Dorsolateral prefrontal cortex (tissue), 120 donors: ENCODE measurements at regions of chr7 and their contacts with region 1.

Region 1: DNA sequence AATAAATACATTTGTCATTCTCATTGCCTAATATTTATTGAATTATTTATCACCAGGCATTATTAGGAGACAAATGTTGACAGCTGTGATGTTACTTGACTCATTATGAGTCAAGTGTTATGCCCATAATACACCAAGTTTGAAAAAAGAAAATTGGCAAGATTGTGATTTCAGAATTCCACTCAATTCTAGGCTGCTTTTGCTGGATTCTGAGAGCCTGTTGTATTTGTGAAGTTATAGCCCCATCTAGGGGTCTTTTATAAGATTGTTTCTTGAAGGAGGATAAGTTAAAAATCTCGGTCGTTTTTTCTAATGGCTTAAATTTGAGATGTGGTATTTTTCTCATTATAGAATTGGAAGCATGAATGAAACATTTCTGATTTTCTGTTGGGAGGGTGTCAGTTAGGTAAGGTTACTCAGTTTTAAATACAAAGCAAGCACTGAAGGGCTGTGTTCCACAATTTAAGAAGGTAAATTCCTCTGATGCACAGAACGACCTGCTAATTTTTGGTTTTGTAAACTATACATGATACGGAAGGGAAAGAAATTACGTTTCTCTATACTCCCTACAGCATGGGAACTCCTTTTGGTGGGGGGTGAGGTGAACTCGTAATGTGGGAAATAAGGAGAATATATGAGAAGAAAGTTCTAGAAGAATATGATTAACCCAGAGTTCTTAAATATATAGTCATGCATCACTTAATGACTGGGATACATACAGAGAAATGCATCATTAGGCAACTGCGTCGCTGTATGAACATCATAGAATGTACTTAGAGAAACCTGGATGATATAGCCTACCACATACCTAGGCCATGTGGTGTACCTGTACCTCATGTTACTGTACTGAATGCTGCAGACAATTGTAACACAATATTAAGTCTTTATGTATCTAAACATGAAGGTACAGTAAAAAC is 2.6 kb downstream of the STK31 start:
- DNase-seq: no peak
- H3K4me3 ChIP-seq: no peak overlapping the region
- H3K27ac ChIP-seq: no peak overlapping the region
- H3K27me3 ChIP-seq: no peaks in the 10 kb centered on the region
- CTCF ChIP-seq: peak; percentile 57 to 96 (median 79)

Region 2: GRCh38 chr7:23546897-23547572 is 165.6 kb before region 1 on chr7:
- intact Hi-C with region 1: loop called (anchors 5 to 10 kb)
- DNase-seq: peak; percentile 55 to 85 (median 73)
- H3K4me3 ChIP-seq: peak overlapping the region in 10 of 59 donors; percentile 0 to 47 (median 12)
- H3K27ac ChIP-seq: no peak overlapping the region
- H3K27me3 ChIP-seq: no peaks in the 10 kb centered on the region
- CTCF ChIP-seq: peak; percentile 92 to 100 (median 98)

Region 3: GRCh38 chr7:23570592-23571200 is 141.9 kb before region 1 on chr7:
- intact Hi-C with region 1: loop called (anchors 2 to 5 kb)
- DNase-seq: peak; percentile 41 to 80 (median 66)
- H3K4me3 ChIP-seq: no peak overlapping the region
- H3K27ac ChIP-seq: no peak overlapping the region
- H3K27me3 ChIP-seq: peaks cover 0 to 5% (median 0%) of the 10 kb centered on the region in 45 donors
- CTCF ChIP-seq: peak; percentile 28 to 91 (median 78)

Region 4: DNA sequence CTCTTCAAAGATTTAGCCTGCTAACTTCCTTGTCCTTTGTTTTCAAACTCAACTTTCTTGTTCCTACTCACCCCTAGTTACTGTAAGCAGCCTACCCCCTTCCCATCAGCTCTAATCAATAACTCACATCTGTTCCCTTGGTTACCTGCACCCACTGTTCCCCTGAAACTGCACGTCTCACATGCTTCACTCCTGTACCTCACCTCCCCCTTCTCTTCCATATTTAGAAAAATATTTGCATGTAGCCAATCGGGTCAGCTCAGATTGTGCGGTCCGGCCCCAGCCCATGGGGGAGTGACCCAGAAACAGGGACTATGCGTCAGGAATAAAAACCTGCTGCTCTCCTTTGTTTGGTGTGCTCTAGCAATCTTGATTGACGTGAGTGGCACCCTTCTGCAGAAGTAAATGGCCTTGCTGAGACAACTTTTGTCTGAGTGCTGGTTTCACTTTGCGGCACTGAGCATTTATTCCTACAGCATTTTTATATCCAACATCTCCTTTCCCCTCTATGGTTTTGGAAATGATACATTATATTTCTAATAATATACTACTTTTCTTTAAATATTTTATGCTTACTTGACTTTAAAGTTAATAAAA is 53.7 kb before region 1 on chr7:
- intact Hi-C with region 1: loop called in 1 of 2 experiments (anchors 5 kb)
- DNase-seq: no peak
- H3K4me3 ChIP-seq: no peak overlapping the region
- H3K27ac ChIP-seq: no peak overlapping the region
- H3K27me3 ChIP-seq: no peaks in the 10 kb centered on the region
- CTCF ChIP-seq: no peak

Region 5: GRCh38 chr7:23679898-23680413 is 32.7 kb before region 1 on chr7 and contains the start of gene FAM221A:
- intact Hi-C with region 1: loop called in 1 of 2 experiments (anchors 2 kb)
- DNase-seq: peak; percentile 83 to 94 (median 90)
- H3K4me3 ChIP-seq: peak within 1 kb of the TSS; percentile 65 to 99 (median 92)
- H3K27ac ChIP-seq: peak within 1 kb of the TSS; percentile 68 to 100 (median 93)
- H3K27me3 ChIP-seq: no peaks in the 10 kb centered on the region
- CTCF ChIP-seq: peak; percentile 25 to 85 (median 72)
- total RNA-seq, gene FAM221A: 10.1 to 49.8 (median 22.1) TPM

Region 6: GRCh38 chr7:23751852-23752251 is 39.2 kb after region 1 on chr7:
- intact Hi-C with region 1: no loop called
- DNase-seq: no peak
- H3K4me3 ChIP-seq: no peak overlapping the region
- H3K27ac ChIP-seq: no peak overlapping the region
- H3K27me3 ChIP-seq: no peaks in the 10 kb centered on the region
- CTCF ChIP-seq: no peak